ENCODE measurements at regions of chr12 and their contacts with region 1.

Region 1: GRCh38 chr12:20250761-20251160 is 117.6 kb upstream of the PDE3A start:
- DNase-seq: no peak
- H3K4me3 ChIP-seq: no peak overlapping the region
- H3K27ac ChIP-seq: no peak overlapping the region
- H3K4me1 ChIP-seq: no peaks in the 10 kb centered on the region
- H3K27me3 ChIP-seq: no peaks in the 10 kb centered on the region
- CTCF ChIP-seq: no peak
- EP300 ChIP-seq: no peak
- POLR2A ChIP-seq: no peak

Region 2: DNA sequence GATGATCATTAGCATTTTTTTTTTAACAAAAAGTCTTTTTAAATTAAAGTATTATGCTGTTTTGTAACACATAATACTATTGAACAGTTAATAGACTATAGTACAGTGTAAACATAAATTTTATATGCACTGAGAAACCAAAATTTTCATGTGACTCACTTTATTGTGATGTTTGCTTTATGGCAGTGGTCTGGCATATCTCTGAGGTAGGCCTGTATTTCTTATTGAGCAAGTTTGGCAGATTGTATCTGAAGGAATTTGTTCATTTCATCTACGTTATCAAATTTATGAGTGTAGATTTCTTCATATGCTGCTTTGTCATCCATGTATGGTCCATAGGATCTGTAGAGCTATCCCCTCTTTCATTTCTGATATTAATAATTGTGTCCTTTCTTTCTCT is 38.8 kb after region 1 on chr12:
- in situ Hi-C with region 1: no loop called
- intact Hi-C with region 1: loop called (anchors 2 kb)
- DNase-seq: no peak
- H3K4me3 ChIP-seq: no peak overlapping the region
- H3K27ac ChIP-seq: no peak overlapping the region
- H3K4me1 ChIP-seq: no peaks in the 10 kb centered on the region
- H3K27me3 ChIP-seq: no peaks in the 10 kb centered on the region
- CTCF ChIP-seq: no peak
- EP300 ChIP-seq: no peak
- POLR2A ChIP-seq: no peak

Measured in transverse colon (tissue), 4 donors.